AG04450 (cell line): ENCODE measurements at regions of chr17 and their contacts with region 1.

Region 1: GRCh38 chr17:51188271-51188833 is 22.1 kb downstream of the NME2 start:
- DNase-seq: no peak
- H3K4me3 ChIP-seq: no peak overlapping the region
- H3K27ac ChIP-seq: no peak overlapping the region
- H3K27me3 ChIP-seq: no peaks in the 10 kb centered on the region
- CTCF ChIP-seq: no peak

Region 2: GRCh38 chr17:51159604-51160003 is 28.7 kb before region 1 on chr17:
- CTCF ChIA-PET with region 1: no interaction called
- POLR2A ChIA-PET with region 1: no interaction called
- DNase-seq: no peak
- H3K4me3 ChIP-seq: no peak overlapping the region
- H3K27ac ChIP-seq: no peak overlapping the region
- H3K27me3 ChIP-seq: no peaks in the 10 kb centered on the region
- CTCF ChIP-seq: no peak

Region 3: GRCh38 chr17:51170736-51171135 is 17.6 kb before region 1 on chr17:
- CTCF ChIA-PET with region 1: no interaction called
- POLR2A ChIA-PET with region 1: interaction called, 10 read pairs
- DNase-seq: no peak
- H3K4me3 ChIP-seq: no peak overlapping the region
- H3K27ac ChIP-seq: no peak overlapping the region
- H3K27me3 ChIP-seq: no peaks in the 10 kb centered on the region
- CTCF ChIP-seq: no peak

Region 4: DNA sequence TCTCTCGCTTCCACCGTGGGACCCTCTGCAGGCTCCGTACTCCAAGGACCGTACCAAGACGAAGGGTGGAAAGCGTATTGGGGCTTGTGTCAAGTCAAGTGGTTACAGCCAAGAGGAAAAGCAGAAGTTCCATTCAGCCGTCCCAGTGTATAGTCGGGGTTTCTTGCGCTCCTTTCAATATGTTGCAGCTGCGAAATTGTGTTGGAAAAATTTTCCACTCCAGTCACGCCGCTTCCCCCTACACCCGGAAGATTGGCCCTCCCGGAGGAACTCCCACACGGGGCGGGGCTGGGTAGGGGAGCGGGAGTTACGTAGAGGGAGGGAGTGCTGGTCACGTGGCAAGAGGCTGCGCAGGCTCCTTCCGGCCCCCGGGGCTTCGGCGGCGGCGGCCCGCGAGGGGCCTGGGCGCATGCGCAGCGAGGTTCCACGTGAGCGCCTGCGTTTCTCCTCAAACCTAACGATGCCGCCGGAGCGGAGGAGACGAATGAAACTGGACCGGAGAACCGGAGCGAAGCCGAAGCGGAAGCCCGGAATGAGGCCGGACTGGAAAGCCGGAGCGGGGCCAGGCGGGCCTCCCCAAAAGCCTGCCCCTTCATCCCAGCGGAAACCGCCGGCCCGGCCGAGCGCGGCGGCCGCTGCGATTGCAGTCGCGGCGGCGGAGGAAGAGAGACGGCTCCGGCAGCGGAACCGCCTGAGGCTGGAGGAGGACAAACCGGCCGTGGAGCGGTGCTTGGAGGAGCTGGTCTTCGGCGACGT is 72.0 kb after region 1 on chr17 and contains the start of gene UTP18:
- CTCF ChIA-PET with region 1: no interaction called
- POLR2A ChIA-PET with region 1: no interaction called
- DNase-seq: peak; percentile 95
- H3K4me3 ChIP-seq: peak within 1 kb of the TSS; percentile 87
- H3K27ac ChIP-seq: peak within 1 kb of the TSS; percentile 100
- H3K27me3 ChIP-seq: no peaks in the 10 kb centered on the region
- CTCF ChIP-seq: no peak
- polyA plus RNA-seq, gene UTP18: 20.3 and 30.6 TPM in 2 replicates